IMR-90 (cell line): ENCODE measurements at regions of chr9 and their contacts with region 1.

Region 1: GRCh38 chr9:111298731-111299598 is 31.1 kb downstream of the OR2K2 start:
- DNase-seq: peak; percentile 81
- ATAC-seq: peak; percentile 93
- H3K4me3 ChIP-seq: no peak overlapping the region
- H3K27ac ChIP-seq: peak overlapping the region; percentile 98
- H3K4me1 ChIP-seq: peaks cover 5% of the 10 kb centered on the region; the same call in 1 of the 2 replicates
- H3K27me3 ChIP-seq: no peaks in the 10 kb centered on the region
- CTCF ChIP-seq: peak; percentile 90
- POLR2A ChIP-seq: peak; percentile 36; the same call in 1 of the 2 replicates
- RAD21 ChIP-seq: peak; percentile 95

Region 2: DNA sequence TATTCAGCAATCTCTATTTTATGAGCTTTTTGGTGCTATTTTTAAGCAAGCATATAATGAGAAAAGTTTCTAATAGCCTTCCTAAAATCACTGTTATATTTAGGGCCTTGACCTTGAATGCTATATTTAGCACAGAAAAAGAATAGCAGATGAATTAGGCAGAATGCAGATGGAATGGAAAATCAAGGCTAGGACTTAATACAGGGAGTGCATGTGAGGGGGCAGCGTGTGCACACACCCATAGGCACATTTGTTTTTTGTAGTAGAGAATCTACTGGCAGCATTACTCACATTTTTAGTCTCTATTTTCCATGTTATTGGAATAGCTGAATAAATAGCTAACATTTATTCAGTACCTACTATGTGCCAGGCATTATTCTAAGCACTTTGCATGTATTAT is 799.4 kb before region 1 on chr9:
- CTCF ChIA-PET with region 1: no interaction called
- POLR2A ChIA-PET with region 1: no interaction called
- dilution Hi-C with region 1: no loop called
- in situ Hi-C with region 1: no loop called
- intact Hi-C with region 1: no loop called
- DNase-seq: no peak
- ATAC-seq: no peak
- H3K4me3 ChIP-seq: no peak overlapping the region
- H3K27ac ChIP-seq: no peak overlapping the region
- H3K4me1 ChIP-seq: no peaks in the 10 kb centered on the region
- H3K27me3 ChIP-seq: no peaks in the 10 kb centered on the region
- CTCF ChIP-seq: no peak
- POLR2A ChIP-seq: no peak
- RAD21 ChIP-seq: no peak

Region 3: GRCh38 chr9:110638381-110638954 is 660.5 kb before region 1 on chr9:
- CTCF ChIA-PET with region 1: no interaction called
- POLR2A ChIA-PET with region 1: no interaction called
- dilution Hi-C with region 1: no loop called
- in situ Hi-C with region 1: loop called (anchors 5 kb)
- intact Hi-C with region 1: loop called (anchors 1 kb)
- DNase-seq: peak; percentile 54
- ATAC-seq: peak; percentile 72
- H3K4me3 ChIP-seq: no peak overlapping the region
- H3K27ac ChIP-seq: peak overlapping the region; percentile 49; the same call in 1 of the 2 replicates
- H3K4me1 ChIP-seq: peaks cover 6% of the 10 kb centered on the region; the same call in 1 of the 2 replicates
- H3K27me3 ChIP-seq: no peaks in the 10 kb centered on the region
- CTCF ChIP-seq: peak; percentile 57
- POLR2A ChIP-seq: 0 out of 2 replicates have a peak, but pooled peaks have one; percentile 38
- RAD21 ChIP-seq: peak; percentile 77

Region 4: DNA sequence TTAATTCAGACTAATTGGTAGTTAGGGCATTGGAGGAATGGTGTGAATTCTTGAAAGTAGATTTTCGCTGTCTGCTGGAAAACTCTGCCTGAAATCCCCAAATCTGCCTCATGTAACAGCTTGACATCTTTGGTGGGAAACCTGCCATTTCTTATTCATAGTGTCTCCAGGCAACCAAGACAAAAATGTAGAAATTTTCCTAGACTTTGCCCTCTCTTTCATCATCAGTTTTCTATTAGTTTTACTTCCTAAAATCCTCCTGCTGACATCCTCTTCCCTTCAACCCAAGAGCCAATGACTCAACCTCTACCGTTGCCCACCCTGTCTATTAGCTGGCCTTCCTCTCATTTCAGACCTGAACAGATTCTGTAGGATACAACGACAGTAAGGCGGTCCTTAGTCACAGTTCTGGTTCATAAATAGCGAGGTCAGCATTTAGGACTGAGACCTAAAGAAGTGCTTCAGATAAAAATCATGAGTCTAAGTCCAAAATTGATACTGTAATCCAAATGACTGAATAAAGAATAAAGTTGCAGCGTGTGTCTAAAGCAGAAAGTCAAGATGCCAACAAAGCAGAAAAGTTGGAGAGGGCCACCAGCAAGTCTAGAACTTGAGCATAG is 496.4 kb before region 1 on chr9:
- CTCF ChIA-PET with region 1: no interaction called
- POLR2A ChIA-PET with region 1: no interaction called
- dilution Hi-C with region 1: no loop called
- in situ Hi-C with region 1: no loop called
- intact Hi-C with region 1: loop called (anchors 5 kb)
- DNase-seq: peak; percentile 65
- ATAC-seq: no peak
- H3K4me3 ChIP-seq: no peak overlapping the region
- H3K27ac ChIP-seq: peak overlapping the region; percentile 81; the same call in 1 of the 2 replicates
- H3K4me1 ChIP-seq: peaks cover 19% of the 10 kb centered on the region
- H3K27me3 ChIP-seq: no peaks in the 10 kb centered on the region
- CTCF ChIP-seq: no peak
- POLR2A ChIP-seq: no peak
- RAD21 ChIP-seq: no peak

Region 5: DNA sequence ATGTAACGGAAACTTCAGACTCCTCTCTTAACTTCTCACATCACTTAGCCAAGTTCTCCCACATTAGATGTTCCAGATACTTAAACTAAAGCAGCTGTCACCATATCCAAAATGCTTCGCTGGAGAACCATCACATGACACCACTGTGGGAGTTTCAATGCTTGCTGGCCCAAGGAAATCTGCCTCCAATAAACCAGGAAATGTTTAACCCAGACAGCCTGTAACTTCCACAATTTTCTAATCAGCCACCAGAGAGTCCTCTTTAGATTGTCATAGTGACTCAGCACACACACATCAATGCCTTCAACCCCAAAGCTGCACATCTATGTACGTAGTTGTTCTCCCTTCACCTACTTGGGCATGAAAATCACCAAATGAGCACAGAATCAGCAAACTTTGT is 379.4 kb before region 1 on chr9:
- CTCF ChIA-PET with region 1: no interaction called
- POLR2A ChIA-PET with region 1: no interaction called
- dilution Hi-C with region 1: no loop called
- in situ Hi-C with region 1: no loop called
- intact Hi-C with region 1: loop called (anchors 10 kb)
- DNase-seq: peak; percentile 90
- ATAC-seq: peak; percentile 18
- H3K4me3 ChIP-seq: no peak overlapping the region
- H3K27ac ChIP-seq: peak overlapping the region; percentile 88
- H3K4me1 ChIP-seq: peaks cover 33% of the 10 kb centered on the region
- H3K27me3 ChIP-seq: no peaks in the 10 kb centered on the region
- CTCF ChIP-seq: no peak
- POLR2A ChIP-seq: no peak
- RAD21 ChIP-seq: peak; percentile 33; the same call in 1 of the 2 replicates